Heart left ventricle (tissue), 16 donors: ENCODE measurements at regions of chr2 and their contacts with region 1.

Region 1: GRCh38 chr2:85132834-85133637 is at the start of gene TCF7L1:
- DNase-seq: peak; percentile 82 to 91 (median 88)
- ATAC-seq: peak; percentile 95 to 97 (median 96)
- H3K4me3 ChIP-seq: peak within 1 kb of the TSS; percentile 61 to 99 (median 82)
- H3K27ac ChIP-seq: peak within 1 kb of the TSS; percentile 38 to 90 (median 81)
- H3K4me1 ChIP-seq: peaks cover 4 to 51% (median 31%) of the 10 kb centered on the region in 12 donors
- H3K27me3 ChIP-seq: peaks cover 0 to 26% (median 0%) of the 10 kb centered on the region in 9 donors
- CTCF ChIP-seq: peak; percentile 78 to 95 (median 89)
- POLR2A ChIP-seq: no peak
- total RNA-seq, gene TCF7L1: 1.9 to 9.8 (median 6.4) TPM

Region 2: GRCh38 chr2:85076618-85077274 is 56.3 kb before region 1 on chr2:
- intact Hi-C with region 1: loop called in 1 of 10 experiments (anchors 5 kb)
- DNase-seq: no peak
- ATAC-seq: no peak
- H3K4me3 ChIP-seq: no peak overlapping the region
- H3K27ac ChIP-seq: no peak overlapping the region
- H3K4me1 ChIP-seq: no peaks in the 10 kb centered on the region
- H3K27me3 ChIP-seq: no peaks in the 10 kb centered on the region
- CTCF ChIP-seq: no peak
- POLR2A ChIP-seq: no peak

Region 3: GRCh38 chr2:85243101-85244072 is 110.4 kb after region 1 on chr2:
- intact Hi-C with region 1: loop called in 8 of 10 experiments (anchors 1 to 10 kb)
- DNase-seq: peak in 4 of 5 donors; percentile 56 to 79 (median 70)
- ATAC-seq: peak in 3 of 4 donors; percentile 46 to 75 (median 57)
- H3K4me3 ChIP-seq: no peak overlapping the region
- H3K27ac ChIP-seq: no peak overlapping the region
- H3K4me1 ChIP-seq: peaks cover 3 to 77% (median 60%) of the 10 kb centered on the region in 12 donors
- H3K27me3 ChIP-seq: no peaks in the 10 kb centered on the region
- CTCF ChIP-seq: peak; percentile 40 to 73 (median 54)
- POLR2A ChIP-seq: no peak

Region 4: DNA sequence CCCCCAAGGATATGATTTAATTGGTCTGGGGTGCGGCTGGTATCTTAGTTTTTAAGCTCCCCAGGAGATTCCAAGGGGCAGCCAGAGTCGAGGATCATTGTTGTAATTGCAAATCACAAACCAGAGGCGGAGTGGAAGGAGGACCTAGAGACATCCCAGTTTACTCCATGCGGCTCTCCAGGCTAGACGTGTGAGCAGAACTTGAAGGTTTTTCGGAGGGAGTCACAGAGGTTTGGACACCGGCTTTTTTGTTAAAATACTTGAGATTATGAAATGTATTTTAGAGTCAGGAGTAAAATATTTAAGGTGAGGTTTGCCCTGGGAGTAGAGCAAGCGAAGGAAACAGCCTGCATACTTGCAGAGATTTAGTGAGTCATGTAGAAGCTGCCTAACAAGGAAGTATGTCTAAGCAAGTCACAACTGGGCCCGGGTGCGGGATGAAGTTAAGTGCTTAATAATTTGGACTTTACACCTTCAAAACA is 155.2 kb after region 1 on chr2:
- intact Hi-C with region 1: loop called (anchors 1 to 5 kb)
- DNase-seq: no peak
- ATAC-seq: no peak
- H3K4me3 ChIP-seq: no peak overlapping the region
- H3K27ac ChIP-seq: no peak overlapping the region
- H3K4me1 ChIP-seq: peaks cover 0 to 15% (median 5%) of the 10 kb centered on the region in 12 donors
- H3K27me3 ChIP-seq: no peaks in the 10 kb centered on the region
- CTCF ChIP-seq: no peak
- POLR2A ChIP-seq: no peak